AG04449 (cell line): ENCODE measurements at regions of chr10 and their contacts with region 1.

Region 1: DNA sequence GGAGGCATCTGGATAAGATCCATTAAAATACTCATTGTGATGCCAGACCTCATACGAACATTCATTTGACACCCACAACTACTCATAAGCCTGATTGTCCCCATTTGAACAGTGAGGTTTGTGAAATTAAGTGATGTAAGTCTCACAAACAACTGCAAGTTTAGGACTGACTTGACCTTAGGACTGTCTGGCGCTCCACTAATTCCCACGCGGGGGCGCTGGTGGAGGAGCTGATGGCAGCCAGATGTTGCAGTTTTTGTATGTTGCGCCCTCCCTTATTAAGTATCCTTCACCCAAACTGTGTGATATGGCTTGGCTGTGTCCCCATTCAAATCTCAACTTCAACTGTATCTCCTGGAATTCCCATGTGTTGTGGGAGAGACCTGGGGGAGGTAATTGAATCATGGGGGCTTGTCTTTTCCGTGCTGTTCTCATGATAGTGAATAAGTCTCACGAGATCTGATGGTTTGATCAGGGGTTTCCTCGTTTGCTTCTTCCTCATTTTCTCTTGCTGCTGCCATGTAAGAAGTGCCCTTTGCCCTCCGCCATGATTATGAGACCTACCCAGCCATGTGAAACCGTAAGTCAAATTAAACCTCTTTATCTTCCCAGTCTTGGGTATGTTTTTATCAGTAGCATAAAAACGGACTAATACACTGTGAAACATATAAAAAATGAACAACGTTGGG is 20.3 kb upstream of the TIAL1 start:
- DNase-seq: no peak
- H3K4me3 ChIP-seq: no peak overlapping the region
- CTCF ChIP-seq: peak; percentile 54

Region 2: DNA sequence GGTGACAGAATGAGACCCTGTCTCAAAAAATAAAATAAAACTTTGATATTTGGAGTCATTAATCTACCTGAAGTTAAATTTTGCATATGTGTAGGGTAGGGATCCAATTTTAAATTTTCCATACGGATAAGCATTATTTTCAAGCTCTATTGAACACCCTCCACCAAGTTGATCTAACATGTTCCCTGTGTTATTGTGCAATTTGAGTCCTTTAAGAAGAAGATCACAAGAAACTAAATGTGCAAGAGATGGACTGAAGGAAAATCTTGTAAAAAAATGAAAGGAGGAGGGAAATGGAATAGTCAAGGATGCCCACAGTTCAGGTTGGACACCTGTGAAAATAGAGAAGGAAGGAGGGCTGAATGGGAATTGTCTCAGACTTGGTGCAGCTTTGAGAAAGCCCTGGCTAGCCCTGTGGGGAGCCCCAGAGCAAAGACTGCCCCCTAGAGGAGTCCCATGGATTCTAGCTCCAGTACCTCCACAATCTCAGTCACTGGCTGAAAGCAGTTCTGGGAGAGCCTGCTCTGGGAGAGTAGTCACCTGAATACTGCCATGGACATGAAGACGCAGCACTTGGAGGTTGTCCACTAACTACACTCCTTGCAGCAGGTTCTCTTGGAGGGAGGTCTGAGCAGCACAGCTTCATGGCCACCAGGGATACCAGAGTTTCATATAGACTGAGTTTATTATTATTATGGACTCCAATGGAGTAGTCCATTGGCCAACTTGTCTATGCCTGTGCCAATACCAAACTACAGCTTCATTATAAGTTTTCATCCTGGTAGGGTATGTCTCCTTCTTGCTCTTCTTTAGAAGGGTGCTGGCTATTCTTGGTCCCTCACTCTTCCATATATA is 14.6 kb before region 1 on chr10:
- CTCF ChIA-PET with region 1: interaction called, 16 read pairs
- POLR2A ChIA-PET with region 1: no interaction called
- DNase-seq: no peak
- H3K4me3 ChIP-seq: no peak overlapping the region
- CTCF ChIP-seq: peak; percentile 57

Region 3: DNA sequence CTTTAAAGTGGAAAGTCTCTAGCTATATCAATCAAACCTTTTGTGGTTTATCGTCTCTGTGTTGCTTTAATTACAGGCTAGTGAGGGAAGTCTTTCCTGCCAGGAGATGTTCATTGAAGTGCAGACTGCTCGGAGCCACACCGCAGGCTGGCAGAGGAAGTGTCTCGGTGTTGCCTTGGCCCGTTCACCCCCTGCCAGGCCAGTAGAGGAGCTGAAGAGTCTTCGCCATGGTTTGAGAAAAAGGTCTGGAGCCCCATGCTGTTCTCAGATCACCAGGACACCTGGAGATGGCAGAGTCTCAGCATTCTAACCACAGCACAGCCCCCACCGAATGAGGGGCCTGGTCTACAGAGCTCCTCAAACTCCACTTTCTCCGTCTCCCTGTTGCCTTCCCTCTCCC is 564.1 kb after region 1 on chr10:
- CTCF ChIA-PET with region 1: no interaction called
- POLR2A ChIA-PET with region 1: no interaction called
- DNase-seq: no peak
- H3K4me3 ChIP-seq: no peak overlapping the region
- CTCF ChIP-seq: no peak

Region 4: DNA sequence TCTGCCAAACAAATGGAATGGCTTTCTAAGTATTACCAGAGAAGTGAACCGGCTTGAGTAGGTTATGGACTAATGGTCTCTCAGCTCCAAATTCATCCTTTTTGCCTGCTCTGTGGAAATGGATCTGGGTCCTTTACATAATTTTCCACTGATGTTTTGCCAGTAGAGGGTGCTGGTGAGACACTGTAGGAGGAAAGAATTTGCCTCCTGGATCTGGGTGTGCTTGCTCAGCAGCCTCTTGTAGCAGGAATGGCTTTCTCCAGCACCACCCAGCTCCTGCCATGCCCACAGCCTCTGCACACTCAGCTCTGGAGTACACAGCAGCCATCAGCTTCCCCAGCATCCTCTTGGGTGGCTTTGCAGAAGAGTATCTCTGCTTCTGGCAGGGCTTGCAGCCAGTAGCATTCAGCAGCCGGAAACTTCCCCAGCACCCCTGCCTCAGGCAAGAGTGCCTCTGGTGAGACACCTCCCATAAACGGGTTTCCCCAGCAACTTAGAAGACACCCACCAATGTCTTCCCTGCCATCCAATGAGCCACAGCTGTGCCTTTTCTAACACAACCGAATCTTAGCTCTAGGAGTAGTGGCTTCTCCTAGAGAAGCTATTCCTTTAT is 605.0 kb after region 1 on chr10:
- CTCF ChIA-PET with region 1: no interaction called
- POLR2A ChIA-PET with region 1: no interaction called
- DNase-seq: no peak
- H3K4me3 ChIP-seq: no peak overlapping the region
- CTCF ChIP-seq: peak; percentile 61